Activated CD4-positive, alpha-beta T cell treated with anti-CD3 and anti-CD28 coated beads, Interleukin-2, amount 10 ng/mL, durations not matched to agents 7 days and 5 days (primary cell): ENCODE measurements at regions of chr10 and their contacts with region 1.

Region 1: GRCh38 chr10:32346134-32346550 is 816 bp downstream of the EPC1 start:
- DNase-seq: peak; percentile 96
- H3K4me3 Mint-ChIP-seq: peak overlapping the region; percentile 91
- H3K27ac Mint-ChIP-seq: peak overlapping the region; percentile 100
- H3K4me1 Mint-ChIP-seq: peaks cover 72% of the 10 kb centered on the region
- H3K27me3 Mint-ChIP-seq: no peaks in the 10 kb centered on the region

Region 2: GRCh38 chr10:32182476-32182875 is 163.7 kb before region 1 on chr10:
- CTCF ChIA-PET with region 1: no interaction called
- POLR2A ChIA-PET with region 1: no interaction called
- DNase-seq: no peak
- H3K4me3 Mint-ChIP-seq: no peak overlapping the region
- H3K27ac Mint-ChIP-seq: no peak overlapping the region
- H3K4me1 Mint-ChIP-seq: no peaks in the 10 kb centered on the region
- H3K27me3 Mint-ChIP-seq: no peaks in the 10 kb centered on the region

Region 3: DNA sequence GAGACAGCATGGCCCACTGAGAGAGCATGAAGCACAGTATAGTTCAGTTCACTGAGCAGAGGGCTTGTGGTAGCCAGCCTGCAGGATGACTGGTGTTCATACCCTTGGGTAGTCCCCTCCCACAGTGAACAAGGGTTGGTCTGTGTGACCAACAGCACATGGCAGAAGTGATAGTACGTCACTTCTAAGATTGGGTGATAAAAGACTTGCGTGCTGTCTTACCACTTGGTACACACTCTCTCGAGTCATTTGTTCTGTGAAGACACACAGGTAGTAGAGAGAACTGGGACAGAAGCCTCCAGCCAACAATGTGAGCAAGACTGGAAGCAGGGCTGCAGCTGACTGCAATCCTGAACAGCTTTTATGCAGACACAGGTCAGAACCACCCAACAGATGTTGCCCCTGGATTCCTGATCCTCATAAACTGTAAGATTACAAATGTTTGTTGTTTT is 13.8 kb before region 1 on chr10:
- CTCF ChIA-PET with region 1: interaction called, 32 read pairs
- POLR2A ChIA-PET with region 1: no interaction called
- DNase-seq: peak; percentile 71
- H3K4me3 Mint-ChIP-seq: peak overlapping the region; percentile 28
- H3K27ac Mint-ChIP-seq: peak overlapping the region; percentile 85
- H3K4me1 Mint-ChIP-seq: peaks cover 84% of the 10 kb centered on the region
- H3K27me3 Mint-ChIP-seq: no peaks in the 10 kb centered on the region

Region 4: DNA sequence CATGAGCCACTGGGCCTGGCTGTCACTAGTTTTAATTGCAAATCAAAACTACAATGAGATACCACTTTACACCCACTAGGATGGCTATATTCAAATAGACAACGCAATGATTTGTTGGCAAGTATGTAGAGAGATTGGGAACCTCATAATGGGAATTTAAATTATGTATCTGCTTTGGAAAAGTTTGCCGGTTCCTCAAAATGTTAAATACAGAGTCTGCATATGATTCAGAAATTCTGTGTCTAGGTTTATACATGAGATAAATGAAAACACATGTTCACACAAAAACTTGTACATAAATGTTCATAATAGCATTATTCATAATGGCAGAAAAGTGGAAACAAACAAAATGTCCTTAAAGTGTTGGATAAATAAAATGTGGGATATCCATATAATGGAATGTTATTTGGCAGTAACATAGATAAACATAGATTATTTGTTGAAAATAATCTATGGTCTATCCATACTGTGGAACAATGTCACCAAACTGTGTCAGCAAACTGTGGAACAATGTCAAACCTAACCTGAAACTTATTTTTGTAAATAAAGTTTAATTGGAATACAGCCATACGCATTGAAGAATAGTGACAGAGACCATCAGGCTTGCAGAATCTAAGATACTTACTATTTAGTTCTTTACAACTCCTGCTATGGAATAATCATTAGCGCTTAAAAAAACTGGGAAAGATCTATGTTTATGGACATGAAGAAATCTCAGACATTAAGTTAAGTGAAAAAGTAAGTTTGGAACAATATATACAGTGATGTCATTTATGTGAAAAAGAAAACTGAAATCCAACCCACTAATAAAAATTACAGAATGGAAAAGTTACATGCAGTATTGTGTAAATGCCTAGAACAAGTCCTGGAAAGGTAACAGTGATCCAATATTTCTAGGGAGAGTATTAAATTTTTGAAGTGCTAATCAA is 170.7 kb after region 1 on chr10:
- CTCF ChIA-PET with region 1: no interaction called
- POLR2A ChIA-PET with region 1: no interaction called
- DNase-seq: no peak
- H3K4me3 Mint-ChIP-seq: no peak overlapping the region
- H3K27ac Mint-ChIP-seq: no peak overlapping the region
- H3K4me1 Mint-ChIP-seq: peaks cover 3% of the 10 kb centered on the region
- H3K27me3 Mint-ChIP-seq: no peaks in the 10 kb centered on the region